ENCODE measurements at regions of chr9 and their contacts with region 1.

Region 1: GRCh38 chr9:34291023-34291422 is 38.0 kb downstream of the KIF24 start:
- DNase-seq: no peak
- H3K4me3 ChIP-seq: no peak overlapping the region
- H3K27ac ChIP-seq: no peak overlapping the region
- H3K4me1 ChIP-seq: no peaks in the 10 kb centered on the region
- H3K27me3 ChIP-seq: no peaks in the 10 kb centered on the region
- CTCF ChIP-seq: no peak
- POLR2A ChIP-seq: no peak

Region 2: DNA sequence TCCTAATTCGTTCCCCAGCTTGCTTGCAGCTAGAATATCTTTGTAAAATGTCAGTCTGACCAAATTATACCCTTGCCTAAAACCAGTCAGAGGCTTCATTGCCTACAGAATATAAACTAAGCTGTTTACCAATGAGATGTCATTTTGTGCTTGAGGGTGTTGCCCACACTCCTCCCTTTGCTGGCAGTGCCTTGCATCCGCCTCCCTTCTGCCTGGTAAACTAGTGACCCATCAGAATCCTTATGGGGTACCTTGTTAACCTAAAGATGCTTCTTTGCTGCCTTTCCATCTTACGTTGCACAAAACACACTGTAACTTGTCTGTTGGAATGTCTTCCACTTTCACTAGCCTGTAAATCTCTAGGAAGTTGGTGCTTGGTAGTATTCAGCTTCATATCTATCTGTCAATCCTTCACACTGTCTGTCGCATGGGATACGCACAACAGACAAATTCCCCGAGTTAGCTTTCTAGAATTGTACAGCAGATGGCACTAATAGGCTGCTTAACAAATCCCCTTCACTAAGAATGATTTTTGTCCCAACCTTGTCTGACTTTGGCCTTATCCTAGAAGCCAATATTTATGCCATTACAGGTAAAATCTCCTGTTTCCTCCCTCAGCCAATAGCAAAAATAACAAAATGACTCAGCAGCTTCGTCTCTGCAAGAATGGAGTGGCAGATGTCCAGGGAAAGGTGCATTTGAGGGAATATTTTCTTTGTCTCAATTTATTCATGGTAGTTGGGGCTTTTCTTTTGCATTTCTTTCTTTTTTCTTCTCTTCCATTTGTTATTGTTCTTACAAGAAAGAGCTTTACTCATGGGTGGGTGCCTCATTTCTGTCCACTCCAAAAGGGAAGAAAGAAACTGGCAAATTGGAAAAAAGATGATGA is 41.3 kb after region 1 on chr9:
- intact Hi-C with region 1: loop called (anchors 2 kb)
- DNase-seq: no peak
- H3K4me3 ChIP-seq: no peak overlapping the region
- H3K27ac ChIP-seq: peak overlapping the region in 1 of 2 donors; percentile 21
- H3K4me1 ChIP-seq: peaks cover 0 to 15% of the 10 kb centered on the region in 2 donors
- H3K27me3 ChIP-seq: no peaks in the 10 kb centered on the region
- CTCF ChIP-seq: peak; percentile 26 to 55 (median 53)
- POLR2A ChIP-seq: no peak

Region 3: GRCh38 chr9:35322075-35322885 is 1031.3 kb after region 1 on chr9:
- intact Hi-C with region 1: no loop called
- DNase-seq: no peak
- H3K4me3 ChIP-seq: peak overlapping the region in 1 of 3 donors; percentile 10
- H3K27ac ChIP-seq: no peak overlapping the region
- H3K4me1 ChIP-seq: no peaks in the 10 kb centered on the region
- H3K27me3 ChIP-seq: no peaks in the 10 kb centered on the region
- CTCF ChIP-seq: no peak
- POLR2A ChIP-seq: no peak